ENCODE measurements at regions of chr7 and their contacts with region 1.

Region 1: DNA sequence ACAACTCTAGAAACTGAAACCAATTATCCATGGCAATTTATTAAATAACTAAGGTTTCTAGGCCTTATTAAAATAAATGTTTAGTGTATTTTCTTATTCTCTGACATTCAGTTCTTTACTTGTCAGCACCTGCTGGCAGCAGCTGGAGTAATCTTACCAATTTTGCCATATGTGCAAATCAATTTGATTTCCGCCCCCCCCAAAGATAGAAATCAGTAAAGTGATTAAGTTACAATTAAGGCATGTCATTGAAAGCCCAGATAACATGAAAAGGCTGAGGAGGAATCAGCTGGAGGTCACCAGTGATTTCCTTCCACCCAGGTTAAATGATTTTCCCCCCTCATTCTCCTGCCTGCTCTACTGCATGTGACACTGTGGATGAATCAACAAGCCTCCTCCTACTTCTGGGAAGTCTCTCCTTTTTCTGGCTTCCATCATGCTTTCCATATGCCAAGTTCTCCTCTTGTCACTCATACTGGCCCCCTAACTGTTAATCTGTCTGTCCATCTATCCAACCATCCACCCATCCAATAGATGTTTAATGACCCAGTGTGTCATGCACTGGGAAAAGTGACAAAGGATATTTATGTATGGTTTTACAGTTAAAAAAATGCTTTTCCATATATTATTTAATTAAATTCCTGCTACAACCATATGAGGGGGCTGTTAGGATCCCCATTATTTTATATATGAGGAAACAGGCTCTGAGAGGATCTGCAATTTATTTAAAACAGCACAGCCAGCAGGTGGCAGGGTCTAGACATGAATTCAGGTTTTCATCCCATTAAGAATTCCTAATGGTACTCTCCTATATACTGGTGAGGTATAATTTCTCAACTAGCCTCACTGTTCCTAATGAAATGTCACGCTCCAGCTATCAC is 116.5 kb downstream of the ATXN7L1 start:
- DNase-seq: peak; percentile 33
- H3K4me3 ChIP-seq: no peak overlapping the region
- H3K27ac ChIP-seq: no peak overlapping the region
- H3K4me1 ChIP-seq: no peaks in the 10 kb centered on the region
- CTCF ChIP-seq: peak; percentile 85

Region 2: DNA sequence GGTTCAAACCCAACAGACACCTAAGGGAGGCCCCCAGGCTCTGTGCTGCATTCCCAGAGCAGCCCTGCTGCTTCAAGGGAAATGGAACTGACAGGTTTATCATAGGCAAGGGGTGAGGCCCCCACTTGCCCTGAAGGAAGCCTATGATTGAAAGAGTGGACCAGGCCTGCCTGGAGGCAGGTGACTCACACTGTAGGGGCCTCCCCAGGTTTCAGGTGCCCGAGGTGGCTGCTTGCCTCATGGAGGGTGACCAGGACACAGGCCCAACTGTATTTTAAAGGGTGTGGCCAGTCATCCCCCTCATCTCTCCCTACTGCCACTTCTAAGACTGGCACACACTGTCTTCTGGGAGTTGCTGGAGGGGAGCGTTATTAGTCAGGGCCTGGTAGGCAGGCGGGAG is 31.1 kb after region 1 on chr7:
- CTCF ChIA-PET with region 1: no interaction called
- POLR2A ChIA-PET with region 1: no interaction called
- intact Hi-C with region 1: loop called (anchors 1 kb)
- DNase-seq: no peak
- H3K4me3 ChIP-seq: no peak overlapping the region
- H3K27ac ChIP-seq: no peak overlapping the region
- H3K4me1 ChIP-seq: no peaks in the 10 kb centered on the region
- CTCF ChIP-seq: no peak

Region 3: DNA sequence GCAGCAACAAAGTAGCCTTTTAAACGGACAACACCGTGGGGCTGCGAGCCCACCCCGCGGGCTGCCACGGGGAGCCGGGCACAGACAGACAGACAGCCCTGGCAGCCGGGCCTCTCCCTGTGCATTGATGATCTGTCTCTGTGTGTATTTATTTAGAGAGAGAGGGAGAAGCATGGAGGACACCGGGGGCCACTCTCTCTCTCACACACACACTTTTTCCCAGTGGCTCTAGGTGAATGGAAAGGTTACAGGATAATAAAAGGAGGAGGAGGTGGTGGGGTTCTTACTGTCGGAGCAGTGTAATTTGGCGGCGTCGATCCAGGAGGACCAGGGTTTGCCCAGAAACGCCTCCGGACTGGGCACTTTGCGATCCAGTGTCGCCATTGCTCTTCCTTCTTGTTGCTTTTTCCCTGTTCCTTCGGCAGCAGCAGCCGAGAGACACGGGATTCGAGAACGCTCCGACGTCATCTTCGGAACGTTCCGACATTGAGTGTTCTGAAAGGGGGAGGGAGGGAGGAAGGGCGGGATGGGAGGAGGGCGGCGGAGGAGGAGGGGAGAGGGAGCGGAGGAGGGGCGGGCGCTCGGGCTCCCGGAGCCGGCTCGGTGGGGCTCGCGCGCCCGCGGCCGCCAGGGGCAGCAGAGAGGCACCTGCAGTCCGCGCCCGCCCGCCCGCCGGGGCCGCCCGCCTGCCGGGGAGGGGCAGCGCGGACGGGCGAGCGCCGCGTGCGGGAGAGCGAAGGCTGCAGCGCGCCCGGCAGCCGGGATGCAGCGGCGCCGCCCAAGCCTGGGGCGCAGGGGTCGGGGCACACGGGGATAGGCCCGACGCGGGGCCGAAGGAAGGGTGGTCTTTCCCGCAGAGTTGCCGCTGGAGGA is 116.4 kb after region 1 on chr7 and contains the start of gene ATXN7L1:
- CTCF ChIA-PET with region 1: no interaction called
- POLR2A ChIA-PET with region 1: no interaction called
- intact Hi-C with region 1: loop called (anchors 10 kb)
- DNase-seq: peak; percentile 73
- H3K4me3 ChIP-seq: peak within 1 kb of the TSS; percentile 63
- H3K27ac ChIP-seq: no peak within 1 kb of the TSS
- H3K4me1 ChIP-seq: no peaks in the 10 kb centered on the region
- CTCF ChIP-seq: peak; percentile 41
- total RNA-seq, gene ATXN7L1: not detected in 2 replicates

Region 4: DNA sequence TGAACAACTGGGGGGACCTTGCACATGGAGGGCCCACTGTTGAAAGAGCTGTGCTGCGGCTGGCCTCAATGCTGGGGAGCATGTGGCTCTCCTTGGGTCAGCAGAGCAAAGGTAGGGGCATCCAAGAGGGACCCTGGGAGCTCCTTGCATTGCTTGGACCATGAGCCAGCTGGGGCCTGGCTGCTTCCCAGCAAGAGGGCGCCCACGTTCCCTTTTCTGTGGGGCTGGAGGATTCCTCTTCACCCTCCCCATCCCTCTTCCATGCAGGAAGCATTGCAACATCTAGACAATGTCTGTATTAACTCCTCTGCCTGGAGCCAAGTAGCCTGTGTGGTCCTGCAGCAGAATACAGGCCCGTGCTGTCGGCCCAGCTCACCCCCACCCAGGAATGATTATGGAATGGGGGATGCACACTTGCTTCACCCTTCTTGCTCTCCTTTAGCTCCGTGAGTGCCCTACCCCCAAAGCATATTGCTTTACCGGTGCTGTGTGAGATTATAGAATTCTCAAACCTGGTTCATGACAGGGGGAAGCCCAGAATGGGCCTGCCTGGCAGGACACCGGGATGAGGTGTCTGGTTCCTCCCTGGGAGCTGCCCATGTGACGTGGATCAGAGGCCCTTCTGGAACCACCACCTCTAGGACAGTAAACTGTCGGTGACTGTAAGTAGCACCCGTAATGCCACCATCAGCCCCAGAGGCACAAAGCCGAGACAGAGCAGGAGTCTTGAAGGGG is 290.3 kb after region 1 on chr7:
- CTCF ChIA-PET with region 1: no interaction called
- POLR2A ChIA-PET with region 1: interaction called, 10 read pairs
- intact Hi-C with region 1: no loop called
- DNase-seq: no peak
- H3K4me3 ChIP-seq: no peak overlapping the region
- H3K27ac ChIP-seq: no peak overlapping the region
- H3K4me1 ChIP-seq: peaks cover 56% of the 10 kb centered on the region
- CTCF ChIP-seq: peak; percentile 56